Activated CD4-positive, alpha-beta T cell treated with anti-CD3 and anti-CD28 coated beads for 36 hours (primary cell): ENCODE measurements at regions of chr9 and their contacts with region 1.

Region 1: GRCh38 chr9:38008168-38009034 is 60.6 kb downstream of the SHB start:
- DNase-seq: peak; percentile 82
- ATAC-seq: peak; percentile 91
- H3K4me3 Mint-ChIP-seq: no peak overlapping the region
- H3K27ac Mint-ChIP-seq: peak overlapping the region; percentile 88
- H3K4me1 Mint-ChIP-seq: peaks cover 17% of the 10 kb centered on the region
- H3K27me3 Mint-ChIP-seq: no peaks in the 10 kb centered on the region

Region 2: GRCh38 chr9:37943329-37944265 is 64.8 kb before region 1 on chr9:
- CTCF ChIA-PET with region 1: no interaction called
- POLR2A ChIA-PET with region 1: no interaction called
- intact Hi-C with region 1: loop called in 1 of 2 experiments (anchors 10 kb)
- DNase-seq: no peak
- ATAC-seq: no peak
- H3K4me3 Mint-ChIP-seq: no peak overlapping the region
- H3K27ac Mint-ChIP-seq: no peak overlapping the region
- H3K4me1 Mint-ChIP-seq: no peaks in the 10 kb centered on the region
- H3K27me3 Mint-ChIP-seq: no peaks in the 10 kb centered on the region

Region 3: DNA sequence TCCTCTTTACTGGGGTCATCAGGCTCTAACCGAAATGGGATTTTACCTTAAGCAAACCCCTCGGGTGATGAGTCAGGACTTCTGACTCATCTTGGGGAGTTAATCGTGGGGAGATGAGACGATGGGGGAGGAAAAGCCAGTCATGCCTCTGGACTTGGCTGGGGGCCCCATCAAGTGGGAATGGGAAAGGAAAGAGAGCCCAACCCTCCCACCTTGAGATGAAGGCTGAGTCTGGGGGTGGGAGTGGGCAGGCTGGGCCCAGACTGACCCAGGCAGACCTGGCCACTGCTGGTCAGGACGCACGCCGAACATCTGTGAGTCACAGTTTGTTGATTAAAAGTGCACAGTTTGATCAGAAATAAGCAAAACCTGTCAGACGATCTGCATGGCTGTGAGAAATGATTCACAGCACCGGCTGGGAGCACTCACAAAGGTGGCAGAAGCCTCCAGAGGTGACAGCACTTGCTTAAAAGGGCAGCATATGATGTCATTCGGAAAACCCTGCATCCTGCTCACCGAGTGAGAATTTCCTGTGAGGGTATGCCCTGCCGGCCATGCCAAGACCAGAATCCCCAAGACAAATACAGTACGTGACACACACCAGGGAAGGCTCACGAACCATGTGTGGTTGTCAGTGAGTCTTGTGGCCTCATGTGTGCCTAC is 54.5 kb before region 1 on chr9:
- CTCF ChIA-PET with region 1: no interaction called
- POLR2A ChIA-PET with region 1: no interaction called
- intact Hi-C with region 1: loop called (anchors 2 to 10 kb)
- DNase-seq: peak; percentile 76
- ATAC-seq: peak; percentile 84
- H3K4me3 Mint-ChIP-seq: peak overlapping the region; percentile 1
- H3K27ac Mint-ChIP-seq: peak overlapping the region; percentile 70
- H3K4me1 Mint-ChIP-seq: peaks cover 31% of the 10 kb centered on the region
- H3K27me3 Mint-ChIP-seq: no peaks in the 10 kb centered on the region

Region 4: GRCh38 chr9:38061326-38061977 is 53.1 kb after region 1 on chr9:
- CTCF ChIA-PET with region 1: no interaction called
- POLR2A ChIA-PET with region 1: no interaction called
- intact Hi-C with region 1: loop called in 1 of 2 experiments (anchors 5 kb)
- DNase-seq: no peak
- ATAC-seq: no peak
- H3K4me3 Mint-ChIP-seq: no peak overlapping the region
- H3K27ac Mint-ChIP-seq: no peak overlapping the region
- H3K4me1 Mint-ChIP-seq: peaks cover 2% of the 10 kb centered on the region
- H3K27me3 Mint-ChIP-seq: no peaks in the 10 kb centered on the region